B cell (primary cell): ENCODE measurements at regions of chr2 and their contacts with region 1.

Region 1: DNA sequence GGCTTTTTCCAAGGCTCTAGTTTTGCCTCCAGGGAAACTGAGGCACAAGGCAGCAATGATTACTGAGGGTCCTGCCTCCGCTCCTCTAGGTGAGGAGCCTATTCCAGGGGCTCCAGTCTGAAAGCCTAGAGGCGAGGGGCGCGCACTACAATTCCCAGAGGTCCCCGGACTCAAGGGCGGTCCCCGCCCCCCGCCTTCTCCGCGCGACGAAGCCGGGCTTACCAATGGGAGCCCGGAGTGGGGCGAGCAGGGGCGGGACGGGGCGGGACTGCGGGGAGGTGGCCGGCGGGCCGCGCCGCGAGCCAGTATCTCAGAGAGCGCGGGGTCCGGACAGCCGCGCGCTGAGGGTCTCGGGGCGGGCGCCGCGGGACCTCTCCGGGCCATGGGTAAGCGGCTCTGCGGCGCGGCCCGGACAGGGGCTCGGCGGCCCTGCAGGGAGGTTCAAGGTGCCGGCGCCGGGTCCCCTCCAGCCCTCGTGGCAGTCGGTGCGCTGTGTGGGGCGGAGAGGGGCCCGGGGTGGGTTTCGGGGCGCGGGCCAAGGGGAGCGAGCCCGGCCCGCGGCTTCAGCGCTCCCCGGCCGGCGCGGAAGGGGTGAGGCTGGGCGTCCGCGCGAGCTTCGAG is at the start of gene ARID5A:
- DNase-seq: peak; percentile 92
- ATAC-seq: peak; percentile 71
- H3K4me3 ChIP-seq: peak within 1 kb of the TSS; percentile 28 to 85 (median 76)
- H3K4me3 Mint-ChIP-seq: peak within 1 kb of the TSS; percentile 83
- H3K27ac ChIP-seq: peak within 1 kb of the TSS; percentile 81 to 94
- H3K27ac Mint-ChIP-seq: peak within 1 kb of the TSS; percentile 97
- H3K4me1 ChIP-seq: peaks cover 38 to 55% of the 10 kb centered on the region in 2 donors
- H3K4me1 Mint-ChIP-seq: peaks cover 44% of the 10 kb centered on the region
- H3K27me3 ChIP-seq: no peaks in the 10 kb centered on the region
- H3K27me3 Mint-ChIP-seq: no peaks in the 10 kb centered on the region
- CTCF ChIP-seq: peak; percentile 45
- total RNA-seq, gene ARID5A: 93.0 and 100 TPM in 2 replicates

Region 2: GRCh38 chr2:96320728-96321622 is 215.6 kb before region 1 on chr2:
- CTCF ChIA-PET with region 1: no interaction called
- POLR2A ChIA-PET with region 1: no interaction called
- intact Hi-C with region 1: loop called (anchors 10 kb)
- DNase-seq: no peak
- ATAC-seq: peak; percentile 9
- H3K4me3 ChIP-seq: peak overlapping the region; percentile 76 to 97 (median 79)
- H3K4me3 Mint-ChIP-seq: peak overlapping the region; percentile 87
- H3K27ac ChIP-seq: peak overlapping the region; percentile 34 to 68
- H3K27ac Mint-ChIP-seq: peak overlapping the region; percentile 84
- H3K4me1 ChIP-seq: peaks cover 33 to 43% of the 10 kb centered on the region in 2 donors
- H3K4me1 Mint-ChIP-seq: peaks cover 49% of the 10 kb centered on the region
- H3K27me3 ChIP-seq: no peaks in the 10 kb centered on the region
- H3K27me3 Mint-ChIP-seq: no peaks in the 10 kb centered on the region
- CTCF ChIP-seq: no peak

Region 3: DNA sequence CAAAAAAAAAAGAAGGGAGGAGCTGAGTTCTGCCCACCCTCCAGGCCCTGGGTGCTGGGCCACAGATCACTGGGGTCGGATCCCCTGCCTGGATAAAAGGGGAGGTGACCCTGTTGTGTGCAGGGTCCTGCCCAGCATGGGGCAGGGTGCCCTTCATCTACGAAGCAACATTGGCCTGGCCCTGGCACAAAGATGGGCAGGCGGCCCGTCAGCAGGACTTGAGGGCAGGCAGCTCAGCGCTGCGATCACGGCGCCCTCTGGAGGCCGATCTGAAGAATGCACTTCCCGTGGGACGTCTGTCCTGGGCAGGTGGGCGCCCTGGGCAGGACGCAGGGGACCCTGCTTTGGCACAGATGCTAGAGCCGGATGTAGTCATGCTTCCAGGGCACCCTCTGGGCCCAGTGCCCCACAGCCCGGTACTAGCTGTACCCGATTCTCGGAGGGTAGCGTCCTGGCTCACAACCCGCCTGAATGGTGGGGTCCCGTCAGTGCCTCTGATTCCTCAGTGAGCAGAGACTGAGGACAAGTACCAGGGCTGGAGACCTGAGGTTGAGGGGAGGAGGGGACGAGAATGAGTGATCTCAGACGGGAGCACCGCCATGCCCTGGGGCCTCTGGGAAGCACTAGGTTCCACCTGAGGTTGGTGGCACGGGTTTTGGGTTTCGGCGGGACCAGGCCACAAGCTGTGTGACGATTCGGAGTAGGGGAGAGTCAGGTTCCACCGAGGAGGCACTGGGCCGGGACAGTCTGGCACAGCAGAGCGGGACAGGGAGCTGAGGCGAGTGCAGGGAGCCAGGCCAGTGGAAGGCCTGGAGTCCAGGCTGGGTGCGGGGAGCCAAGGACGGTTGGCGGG is 18.0 kb after region 1 on chr2:
- CTCF ChIA-PET with region 1: interaction called, 84 read pairs
- POLR2A ChIA-PET with region 1: interaction called, 12 read pairs
- intact Hi-C with region 1: loop called (anchors 1 kb)
- DNase-seq: peak; percentile 86
- ATAC-seq: peak; percentile 83
- H3K4me3 ChIP-seq: no peak overlapping the region
- H3K4me3 Mint-ChIP-seq: peak overlapping the region; percentile 16
- H3K27ac ChIP-seq: no peak overlapping the region
- H3K27ac Mint-ChIP-seq: peak overlapping the region; percentile 10
- H3K4me1 ChIP-seq: peaks cover 6 to 11% of the 10 kb centered on the region in 2 donors
- H3K4me1 Mint-ChIP-seq: peaks cover 15% of the 10 kb centered on the region
- H3K27me3 ChIP-seq: no peaks in the 10 kb centered on the region
- H3K27me3 Mint-ChIP-seq: no peaks in the 10 kb centered on the region
- CTCF ChIP-seq: peak; percentile 99

Region 4: GRCh38 chr2:96739633-96740428 is 203.3 kb after region 1 on chr2 and contains the start of gene LMAN2L:
- CTCF ChIA-PET with region 1: no interaction called
- POLR2A ChIA-PET with region 1: interaction called, 4 read pairs
- intact Hi-C with region 1: loop called (anchors 2 kb)
- DNase-seq: peak; percentile 97
- ATAC-seq: peak; percentile 98
- H3K4me3 ChIP-seq: peak within 1 kb of the TSS; percentile 67 to 93 (median 88)
- H3K4me3 Mint-ChIP-seq: peak within 1 kb of the TSS; percentile 97
- H3K27ac ChIP-seq: peak within 1 kb of the TSS; percentile 80 to 85
- H3K27ac Mint-ChIP-seq: peak within 1 kb of the TSS; percentile 97
- H3K4me1 ChIP-seq: peaks cover 14 to 25% of the 10 kb centered on the region in 2 donors
- H3K4me1 Mint-ChIP-seq: peaks cover 29% of the 10 kb centered on the region
- H3K27me3 ChIP-seq: no peaks in the 10 kb centered on the region
- H3K27me3 Mint-ChIP-seq: no peaks in the 10 kb centered on the region
- CTCF ChIP-seq: no peak
- total RNA-seq, gene LMAN2L: 10.7 TPM in 2 replicates

Region 5: DNA sequence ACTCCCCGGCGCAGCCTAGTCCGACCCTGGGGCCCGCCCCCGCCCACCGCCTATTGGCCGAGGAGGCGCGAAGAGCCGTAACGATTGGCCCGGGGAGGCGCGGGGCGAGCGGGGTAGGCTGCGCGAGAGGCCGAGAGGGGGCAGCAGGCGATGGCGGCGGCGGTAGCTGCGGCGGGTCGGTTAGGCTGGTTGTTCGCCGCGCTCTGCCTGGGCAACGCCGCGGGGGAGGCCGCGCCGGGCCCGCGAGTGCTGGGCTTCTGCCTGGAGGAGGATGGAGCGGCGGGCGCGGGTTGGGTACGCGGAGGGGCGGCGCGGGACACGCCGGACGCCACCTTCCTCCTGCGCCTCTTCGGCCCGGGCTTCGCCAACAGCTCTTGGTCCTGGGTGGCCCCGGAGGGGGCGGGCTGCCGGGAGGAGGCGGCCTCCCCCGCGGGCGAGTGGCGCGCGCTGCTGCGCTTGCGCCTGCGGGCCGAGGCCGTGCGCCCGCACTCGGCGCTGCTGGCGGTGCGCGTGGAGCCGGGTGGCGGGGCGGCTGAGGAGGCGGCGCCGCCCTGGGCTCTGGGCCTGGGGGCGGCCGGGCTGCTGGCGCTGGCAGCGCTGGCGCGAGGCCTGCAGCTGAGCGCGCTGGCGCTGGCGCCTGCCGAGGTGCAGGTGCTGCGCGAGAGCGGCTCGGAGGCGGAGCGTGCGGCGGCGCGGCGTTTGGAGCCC is 279.7 kb after region 1 on chr2 and contains the start of gene CNNM3:
- CTCF ChIA-PET with region 1: interaction called, 3 read pairs
- POLR2A ChIA-PET with region 1: no interaction called
- intact Hi-C with region 1: loop called (anchors 5 kb)
- DNase-seq: peak; percentile 96
- ATAC-seq: peak; percentile 91
- H3K4me3 ChIP-seq: peak within 1 kb of the TSS; percentile 59 to 95 (median 81)
- H3K4me3 Mint-ChIP-seq: peak within 1 kb of the TSS; percentile 93
- H3K27ac ChIP-seq: peak within 1 kb of the TSS; percentile 19 to 76
- H3K27ac Mint-ChIP-seq: peak within 1 kb of the TSS; percentile 93
- H3K4me1 ChIP-seq: peaks cover 34 to 37% of the 10 kb centered on the region in 2 donors
- H3K4me1 Mint-ChIP-seq: peaks cover 57% of the 10 kb centered on the region
- H3K27me3 ChIP-seq: no peaks in the 10 kb centered on the region
- H3K27me3 Mint-ChIP-seq: no peaks in the 10 kb centered on the region
- CTCF ChIP-seq: peak; percentile 73
- total RNA-seq, gene CNNM3: 52.1 and 54.7 TPM in 2 replicates